ENCODE measurements at regions of chr5 and their contacts with region 1.

Region 1: GRCh38 chr5:149960272-149961185 is at the start of gene SLC26A2:
- DNase-seq: peak; percentile 94
- H3K4me3 Mint-ChIP-seq: peak within 1 kb of the TSS; percentile 95
- H3K27ac Mint-ChIP-seq: peak within 1 kb of the TSS; percentile 100
- H3K4me1 Mint-ChIP-seq: peaks cover 37% of the 10 kb centered on the region
- H3K27me3 Mint-ChIP-seq: no peaks in the 10 kb centered on the region
- total RNA-seq, gene SLC26A2: 9.3 and 9.5 TPM in 2 replicates

Region 2: DNA sequence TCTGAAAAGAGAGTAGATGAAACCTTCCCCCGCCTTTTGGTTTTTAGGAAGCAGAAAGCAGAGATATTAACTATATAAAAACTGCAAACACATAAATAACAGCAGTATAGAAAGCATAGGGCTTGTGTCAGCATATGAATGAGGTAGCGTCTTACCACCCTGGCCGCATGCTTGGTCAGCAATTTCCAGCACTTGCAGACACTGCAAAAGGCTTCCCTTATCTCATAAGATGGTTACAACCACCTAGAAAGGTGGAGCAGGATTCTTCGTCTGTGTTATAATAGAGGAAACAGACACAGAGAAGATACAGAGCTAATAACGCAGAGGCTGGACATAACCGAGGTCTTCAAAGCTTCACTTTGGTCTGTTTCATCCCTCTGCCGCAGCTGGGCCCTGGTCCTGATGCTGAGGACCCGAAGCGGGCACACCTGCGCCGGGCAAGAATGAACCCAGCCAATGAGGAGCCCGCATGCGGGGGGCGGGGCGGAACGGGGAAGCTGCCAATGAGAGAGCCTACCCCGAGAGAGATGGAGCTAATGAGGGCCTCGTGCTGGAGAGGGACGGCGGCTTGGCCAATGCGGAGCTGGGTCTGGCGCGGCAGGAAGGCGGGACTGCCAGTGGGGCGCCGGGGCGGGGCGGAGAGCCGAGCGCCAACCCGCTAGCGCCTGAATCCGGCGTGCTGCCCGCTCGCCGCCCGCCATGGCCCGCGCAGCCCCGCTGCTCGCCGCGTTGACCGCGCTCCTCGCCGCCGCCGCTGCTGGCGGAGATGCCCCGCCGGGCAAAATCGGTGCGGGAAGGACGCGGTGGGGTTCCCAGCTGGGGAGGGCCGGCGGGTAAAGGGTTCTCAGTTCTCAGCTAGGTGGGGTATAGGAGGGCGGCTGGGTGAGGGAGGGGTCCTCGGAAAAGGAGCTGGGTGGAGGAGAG is 602.9 kb before region 1 on chr5 and contains the start of gene PCYOX1L:
- intact Hi-C with region 1: loop called (anchors 1 kb)
- DNase-seq: peak; percentile 97
- H3K4me3 Mint-ChIP-seq: peak within 1 kb of the TSS; percentile 93
- H3K27ac Mint-ChIP-seq: peak within 1 kb of the TSS; percentile 84
- H3K4me1 Mint-ChIP-seq: peaks cover 67% of the 10 kb centered on the region
- H3K27me3 Mint-ChIP-seq: no peaks in the 10 kb centered on the region
- total RNA-seq, gene PCYOX1L: 21.9 and 23.4 TPM in 2 replicates

Region 3: DNA sequence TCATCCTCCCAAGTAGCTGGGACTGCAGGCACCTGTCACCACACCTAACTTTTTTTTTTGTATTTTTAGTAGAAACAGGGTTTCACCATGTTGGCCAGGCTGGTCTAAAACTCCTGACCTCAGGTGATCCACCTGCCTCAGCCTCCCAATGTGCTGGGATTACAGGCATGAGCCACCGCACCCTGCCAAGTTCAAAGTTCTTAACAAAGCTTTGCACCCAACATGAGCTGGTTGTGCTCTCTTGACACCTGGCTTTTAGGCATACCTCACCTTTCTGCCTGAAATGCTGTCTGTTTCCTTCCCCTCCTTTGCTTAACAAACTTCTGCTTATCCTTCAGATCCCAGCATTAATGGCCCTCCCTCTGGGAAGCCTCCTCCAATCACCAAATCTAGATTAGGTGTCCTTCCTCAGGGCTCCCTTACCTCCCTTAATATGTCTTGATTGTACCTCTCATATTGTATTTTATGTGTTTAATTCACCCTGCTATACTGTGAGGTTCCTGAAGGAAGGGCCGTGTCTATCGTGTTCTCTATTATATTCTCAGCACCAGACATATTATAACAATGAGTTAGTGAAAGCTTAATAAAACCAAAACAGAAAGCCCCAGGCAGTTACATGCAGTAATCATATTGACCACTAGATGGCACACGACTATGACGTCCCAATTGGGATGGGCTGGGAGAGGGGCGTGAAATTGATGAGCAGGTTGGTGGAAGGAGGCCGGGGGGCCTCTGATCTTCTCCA is 293.3 kb before region 1 on chr5:
- intact Hi-C with region 1: loop called (anchors 5 kb)
- DNase-seq: no peak
- H3K4me3 Mint-ChIP-seq: no peak overlapping the region
- H3K27ac Mint-ChIP-seq: no peak overlapping the region
- H3K4me1 Mint-ChIP-seq: peaks cover 4% of the 10 kb centered on the region
- H3K27me3 Mint-ChIP-seq: peaks cover 6% of the 10 kb centered on the region

Region 4: GRCh38 chr5:149834246-149834855 is 126.2 kb before region 1 on chr5:
- intact Hi-C with region 1: loop called (anchors 1 kb)
- DNase-seq: peak; percentile 50
- H3K4me3 Mint-ChIP-seq: no peak overlapping the region
- H3K27ac Mint-ChIP-seq: no peak overlapping the region
- H3K4me1 Mint-ChIP-seq: peaks cover 13% of the 10 kb centered on the region
- H3K27me3 Mint-ChIP-seq: no peaks in the 10 kb centered on the region

Region 5: DNA sequence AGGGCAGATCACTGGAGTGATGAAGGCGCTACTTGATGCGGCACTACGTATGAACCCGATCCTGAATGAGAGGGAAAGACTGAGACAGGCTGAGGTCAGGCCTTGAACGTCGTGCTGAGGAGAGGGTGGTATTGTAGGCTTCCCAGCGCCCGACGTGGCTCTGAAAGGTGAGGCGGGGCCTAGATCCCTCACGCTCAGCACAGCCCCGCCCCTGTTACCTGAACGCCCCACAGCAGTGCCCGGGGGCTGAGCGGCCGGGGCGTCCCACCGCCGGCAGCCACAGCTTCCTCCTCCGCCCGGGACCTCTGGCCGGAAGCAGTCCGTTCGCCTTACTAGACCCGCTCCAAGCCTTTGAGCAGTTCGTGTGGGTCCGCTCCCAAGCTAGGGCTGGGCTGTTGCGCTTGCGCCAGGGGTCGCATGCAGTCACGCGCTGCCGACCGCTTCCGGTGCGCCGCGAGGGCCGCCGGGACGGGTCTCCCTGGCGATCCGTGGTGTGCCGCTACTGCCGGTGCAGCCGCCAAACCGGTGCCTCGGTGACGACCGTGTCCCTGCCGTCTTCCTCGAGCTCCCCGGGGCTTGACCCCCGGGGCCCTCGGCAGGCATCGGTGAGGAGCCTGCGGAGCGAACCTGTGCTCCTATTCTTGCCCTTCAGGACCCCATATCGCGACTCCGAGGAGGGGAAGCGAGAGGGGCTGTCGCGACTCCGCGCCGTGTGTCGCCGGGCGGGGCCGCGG is 39.9 kb after region 1 on chr5 and contains the starts of genes HMGXB3 and TIGD6:
- intact Hi-C with region 1: loop called (anchors 1 kb)
- DNase-seq: peak; percentile 82
- H3K4me3 Mint-ChIP-seq: peak within 1 kb of the TSS; percentile 99
- H3K27ac Mint-ChIP-seq: peak within 1 kb of the TSS; percentile 98
- H3K4me1 Mint-ChIP-seq: peaks cover 52% of the 10 kb centered on the region
- H3K27me3 Mint-ChIP-seq: no peaks in the 10 kb centered on the region
- total RNA-seq, gene HMGXB3: 49.1 and 49.9 TPM in 2 replicates
- total RNA-seq, gene TIGD6: 2.4 TPM in 2 replicates

Region 6: DNA sequence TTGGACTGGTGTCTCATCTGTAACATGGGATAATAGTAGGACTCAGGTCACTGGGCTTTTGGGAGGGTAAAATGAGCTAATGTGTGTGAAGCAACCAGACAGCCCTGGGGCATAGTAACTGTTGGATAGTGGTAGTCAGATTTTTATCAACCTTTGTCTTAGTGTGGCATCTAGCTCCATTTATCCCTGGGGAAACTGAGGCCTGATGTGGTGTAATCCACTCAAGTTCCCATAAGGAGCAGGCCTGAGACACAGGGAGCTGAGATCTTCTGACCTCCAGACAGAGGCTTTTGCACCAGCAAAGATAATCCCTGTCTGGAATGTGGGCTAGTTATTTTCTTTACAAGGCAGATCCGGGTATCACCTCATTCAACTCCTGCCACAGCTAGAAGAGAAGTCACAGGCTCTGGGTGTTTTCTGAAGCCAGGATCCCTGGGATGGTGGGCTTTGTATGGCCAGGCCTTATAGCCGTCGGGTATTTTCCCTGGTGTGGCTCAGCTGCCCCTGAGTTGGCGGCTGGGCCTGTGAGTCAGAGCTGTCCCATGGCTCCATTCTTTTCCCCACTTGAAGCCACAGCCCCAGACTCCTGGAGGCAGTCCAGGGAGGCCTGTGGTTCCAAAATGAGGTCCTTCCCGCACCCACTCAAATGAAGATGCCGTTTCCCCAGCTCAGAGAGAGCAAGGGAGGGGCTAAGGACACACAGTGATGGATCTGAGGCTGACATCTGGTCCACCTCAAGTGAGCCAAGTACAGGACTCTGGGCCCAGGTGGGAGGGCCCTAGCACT is 151.9 kb after region 1 on chr5:
- intact Hi-C with region 1: no loop called
- DNase-seq: no peak
- H3K4me3 Mint-ChIP-seq: no peak overlapping the region
- H3K27ac Mint-ChIP-seq: no peak overlapping the region
- H3K4me1 Mint-ChIP-seq: no peaks in the 10 kb centered on the region
- H3K27me3 Mint-ChIP-seq: peaks cover 11% of the 10 kb centered on the region

Region 7: DNA sequence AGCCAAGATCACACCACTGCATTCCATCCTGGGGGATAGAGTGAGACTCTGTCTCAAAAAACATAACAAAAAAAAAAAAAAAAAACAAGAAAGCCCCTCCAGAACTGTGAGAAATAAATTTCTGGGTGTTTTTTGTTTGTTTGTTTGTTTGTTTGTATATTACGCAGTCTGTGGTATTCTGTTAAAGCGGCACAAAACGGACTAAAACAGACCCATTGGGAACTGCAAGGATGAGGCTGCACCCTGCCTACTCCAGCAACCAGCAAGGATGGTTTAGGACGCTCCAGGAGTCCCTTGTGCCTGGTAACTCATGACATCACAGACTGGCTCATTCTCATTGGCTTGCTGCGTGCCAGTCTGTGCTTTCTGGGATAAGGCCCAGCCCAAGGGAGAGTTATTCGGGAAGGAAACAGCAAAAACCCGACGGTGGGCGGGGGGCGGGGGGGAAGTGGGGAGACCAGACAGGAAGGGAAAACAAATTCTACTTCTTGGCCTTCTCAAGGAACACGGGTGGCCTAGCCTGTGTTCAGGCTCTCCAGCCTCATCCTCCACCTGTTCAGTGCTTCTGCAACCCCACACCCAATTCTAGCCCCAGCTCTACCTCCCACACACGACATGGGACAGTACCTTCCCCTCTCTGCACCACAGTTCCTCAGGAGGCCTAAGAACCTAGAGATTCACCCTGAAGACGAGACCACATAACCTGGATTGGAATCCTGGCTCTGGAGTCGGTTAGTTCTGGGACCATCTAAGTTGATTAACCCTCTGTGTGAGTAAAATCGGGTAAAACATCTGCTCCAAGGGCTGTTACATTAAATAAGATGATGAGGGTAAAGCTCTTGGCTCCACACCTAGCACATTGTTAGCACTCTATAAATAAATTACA is 449.4 kb after region 1 on chr5:
- intact Hi-C with region 1: loop called (anchors 1 kb)
- DNase-seq: peak; percentile 38
- H3K4me3 Mint-ChIP-seq: peak overlapping the region; percentile 91
- H3K27ac Mint-ChIP-seq: peak overlapping the region; percentile 98
- H3K4me1 Mint-ChIP-seq: peaks cover 45% of the 10 kb centered on the region
- H3K27me3 Mint-ChIP-seq: no peaks in the 10 kb centered on the region